GM10248 (cell line): ENCODE measurements at regions of chr6 and their contacts with region 1.

Region 1: GRCh38 chr6:135451693-135452092 is 45.8 kb downstream of the AHI1 start:
- DNase-seq: no peak
- CTCF ChIP-seq: peak; percentile 62

Region 2: DNA sequence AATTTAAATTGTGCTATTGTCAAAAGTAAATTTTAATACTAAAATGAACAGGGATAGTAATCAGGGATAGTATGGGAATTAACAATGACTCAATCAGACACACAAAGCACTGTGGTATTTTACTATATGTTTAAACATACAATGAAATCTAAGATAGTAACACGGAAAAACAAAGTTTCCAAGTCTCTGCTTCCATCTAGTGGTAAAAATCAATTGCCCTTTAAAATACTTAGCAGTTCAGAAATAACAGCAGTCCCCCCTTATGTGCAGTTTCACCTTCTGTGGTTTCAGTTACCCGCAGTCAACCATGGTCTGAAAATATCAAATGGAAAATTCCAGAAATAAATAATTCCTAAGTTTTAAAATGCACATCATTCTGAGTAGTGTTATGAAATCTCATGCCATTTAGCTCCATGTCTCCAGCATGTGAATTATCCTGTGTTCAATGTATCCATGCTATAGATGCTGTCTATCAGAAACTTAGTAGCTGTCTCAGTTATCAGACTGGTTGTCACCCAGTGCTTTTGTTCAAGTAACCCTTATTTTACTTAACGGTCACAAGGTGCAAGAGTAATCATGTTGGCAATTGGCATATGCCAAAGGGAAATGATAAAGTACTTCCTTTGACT is 12.7 kb before region 1 on chr6:
- CTCF ChIA-PET with region 1: interaction called, 16 read pairs
- POLR2A ChIA-PET with region 1: no interaction called
- DNase-seq: peak; percentile 35
- CTCF ChIP-seq: peak; percentile 45

Region 3: GRCh38 chr6:135465307-135465706 is 13.6 kb after region 1 on chr6:
- CTCF ChIA-PET with region 1: interaction called, 11 read pairs
- POLR2A ChIA-PET with region 1: no interaction called
- DNase-seq: peak; percentile 35
- CTCF ChIP-seq: no peak

Region 4: GRCh38 chr6:135475292-135475886 is 23.7 kb after region 1 on chr6:
- CTCF ChIA-PET with region 1: interaction called, 13 read pairs
- POLR2A ChIA-PET with region 1: no interaction called
- DNase-seq: no peak
- CTCF ChIP-seq: no peak